Dendritic cell treated with granulocyte-macrophage colony-stimulating factor and Interleukin-4, amounts not matched to agents 40 ng/mL and 50 ng/mL, for 4 days (primary cell): ENCODE measurements at regions of chr18 and their contacts with region 1.

Region 1: GRCh38 chr18:57621246-57621604 is 411 bp downstream of the NARS1 start:
- H3K4me3 Mint-ChIP-seq: peak overlapping the region; percentile 97
- H3K27ac Mint-ChIP-seq: peak overlapping the region; percentile 98
- H3K4me1 Mint-ChIP-seq: peaks cover 13% of the 10 kb centered on the region
- H3K27me3 Mint-ChIP-seq: no peaks in the 10 kb centered on the region

Region 2: DNA sequence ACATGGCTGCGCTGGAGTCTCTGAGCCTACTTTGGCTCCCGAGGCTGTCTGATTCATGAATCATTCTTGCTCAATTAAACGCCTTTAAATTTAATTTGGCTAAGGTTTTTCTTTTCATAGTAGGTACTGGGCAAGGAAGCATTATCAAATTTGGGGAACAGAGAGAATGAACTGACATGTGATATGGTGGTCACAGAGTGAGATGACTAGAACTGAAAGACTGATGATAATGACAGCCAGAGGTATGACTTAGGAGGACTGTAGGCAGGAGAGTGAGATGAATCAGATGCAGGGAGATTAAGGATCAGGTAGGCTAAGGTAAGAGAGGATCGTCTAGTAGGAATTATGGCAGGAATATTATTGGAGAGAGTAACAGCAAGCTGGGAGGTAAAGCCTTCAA is 309.8 kb before region 1 on chr18:
- intact Hi-C with region 1: no loop called
- H3K4me3 Mint-ChIP-seq: no peak overlapping the region
- H3K27ac Mint-ChIP-seq: no peak overlapping the region
- H3K4me1 Mint-ChIP-seq: no peaks in the 10 kb centered on the region
- H3K27me3 Mint-ChIP-seq: no peaks in the 10 kb centered on the region

Region 3: GRCh38 chr18:57475903-57476302 is 145.3 kb before region 1 on chr18:
- intact Hi-C with region 1: no loop called
- H3K4me3 Mint-ChIP-seq: no peak overlapping the region
- H3K27ac Mint-ChIP-seq: no peak overlapping the region
- H3K4me1 Mint-ChIP-seq: peaks cover 7% of the 10 kb centered on the region
- H3K27me3 Mint-ChIP-seq: peaks cover 30% of the 10 kb centered on the region

Region 4: GRCh38 chr18:57586251-57587049 is 34.8 kb before region 1 on chr18 and contains the start of gene FECH:
- intact Hi-C with region 1: loop called (anchors 2 kb)
- H3K4me3 Mint-ChIP-seq: peak within 1 kb of the TSS; percentile 93
- H3K27ac Mint-ChIP-seq: peak within 1 kb of the TSS; percentile 89
- H3K4me1 Mint-ChIP-seq: peaks cover 25% of the 10 kb centered on the region
- H3K27me3 Mint-ChIP-seq: no peaks in the 10 kb centered on the region

Region 5: GRCh38 chr18:57668021-57668420 is 46.8 kb after region 1 on chr18:
- intact Hi-C with region 1: no loop called
- H3K4me3 Mint-ChIP-seq: no peak overlapping the region
- H3K27ac Mint-ChIP-seq: no peak overlapping the region
- H3K4me1 Mint-ChIP-seq: peaks cover 44% of the 10 kb centered on the region
- H3K27me3 Mint-ChIP-seq: no peaks in the 10 kb centered on the region

Region 6: DNA sequence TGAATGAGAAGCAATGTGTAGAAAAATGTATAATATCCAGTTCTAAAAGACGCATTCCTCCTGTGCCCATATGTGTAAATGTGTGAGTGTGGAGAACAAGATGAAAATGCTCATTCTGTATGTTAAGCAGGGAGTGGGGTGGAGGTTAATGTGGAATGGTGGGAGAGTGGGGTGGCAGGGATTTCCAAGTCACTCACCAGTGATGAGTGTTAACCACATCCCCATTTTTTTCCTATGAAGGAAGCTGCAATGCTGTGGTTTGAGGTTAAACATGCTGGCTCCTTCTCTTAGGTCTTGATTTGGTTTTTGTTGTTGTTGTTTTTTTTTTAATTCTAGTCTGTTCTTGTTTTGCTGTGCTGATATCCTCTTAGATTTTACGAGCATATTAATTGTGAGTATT is 592.2 kb after region 1 on chr18:
- intact Hi-C with region 1: loop called (anchors 10 kb)
- H3K4me3 Mint-ChIP-seq: peak overlapping the region; percentile 60
- H3K27ac Mint-ChIP-seq: peak overlapping the region; percentile 87
- H3K4me1 Mint-ChIP-seq: peaks cover 65% of the 10 kb centered on the region
- H3K27me3 Mint-ChIP-seq: peaks cover 31% of the 10 kb centered on the region